GM18951 (cell line): ENCODE measurements at regions of chr9 and their contacts with region 1.

Region 1: GRCh38 chr9:114754581-114754980 is 51.3 kb downstream of the TNFSF15 start:
- POLR2A ChIP-seq: no peak

Region 2: GRCh38 chr9:114339130-114339908 is 415.3 kb before region 1 on chr9:
- in situ Hi-C with region 1: no loop called
- POLR2A ChIP-seq: no peak

Region 3: GRCh38 chr9:114691046-114691955 is 63.3 kb before region 1 on chr9:
- in situ Hi-C with region 1: no loop called
- POLR2A ChIP-seq: no peak

Region 4: GRCh38 chr9:115524453-115525059 is 770.0 kb after region 1 on chr9:
- in situ Hi-C with region 1: loop called (anchors 25 kb)
- POLR2A ChIP-seq: no peak